GM12878 (cell line): ENCODE measurements at regions of chr12 and their contacts with region 1.

Region 1: GRCh38 chr12:82638324-82638723 is 48.4 kb upstream of the TMTC2 start:
- DNase-seq: no peak
- ATAC-seq: peak; percentile 60
- H3K4me3 ChIP-seq: no peak overlapping the region
- H3K27ac ChIP-seq: no peak overlapping the region
- H3K4me1 ChIP-seq: no peaks in the 10 kb centered on the region
- H3K27me3 ChIP-seq: no peaks in the 10 kb centered on the region
- CTCF ChIP-seq: no peak
- EP300 ChIP-seq: no peak
- POLR2A ChIP-seq: no peak
- RAD21 ChIP-seq: no peak

Region 2: DNA sequence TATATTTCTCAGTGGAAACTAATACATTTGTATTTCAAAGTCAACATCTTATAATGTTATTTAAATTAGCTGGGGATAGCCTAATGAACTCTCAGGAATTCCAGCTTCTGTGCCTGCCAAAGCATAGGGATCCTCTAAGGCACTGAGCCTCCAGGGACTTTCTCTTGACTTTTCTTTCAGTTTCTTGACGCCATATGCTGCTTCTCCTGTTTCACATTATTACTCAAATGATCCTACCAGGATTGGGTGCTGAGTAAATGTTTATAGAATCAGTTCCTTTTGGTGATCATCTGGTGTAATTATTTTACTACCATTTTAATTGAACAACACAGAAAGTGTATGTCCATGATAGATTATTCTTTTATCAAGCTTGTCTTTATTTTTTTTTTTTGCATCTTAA is 272.1 kb before region 1 on chr12:
- CTCF ChIA-PET with region 1: no interaction called
- POLR2A ChIA-PET with region 1: no interaction called
- RAD21 ChIA-PET with region 1: no interaction called
- SMC1A ChIA-PET with region 1: no interaction called
- in situ Hi-C with region 1: loop called (anchors 10 kb)
- intact Hi-C with region 1: no loop called
- DNase-seq: no peak
- ATAC-seq: peak; percentile 71
- H3K4me3 ChIP-seq: no peak overlapping the region
- H3K27ac ChIP-seq: no peak overlapping the region
- H3K4me1 ChIP-seq: no peaks in the 10 kb centered on the region
- H3K27me3 ChIP-seq: no peaks in the 10 kb centered on the region
- CTCF ChIP-seq: no peak
- EP300 ChIP-seq: peak in 1 of 2 experiments; percentile 33; a peak in 1 of 4 replicates
- POLR2A ChIP-seq: no peak
- RAD21 ChIP-seq: no peak